ENCODE measurements at regions of chr22 and their contacts with region 1.

Region 1: GRCh38 chr22:46563381-46564083 is 26.1 kb upstream of the CELSR1 start:
- DNase-seq: peak; percentile 64
- ATAC-seq: peak; percentile 95
- H3K4me3 ChIP-seq: peak overlapping the region; percentile 41 to 76 (median 58); a peak in 5 of 6 replicates
- H3K27ac ChIP-seq: peak overlapping the region; percentile 59
- H3K4me1 ChIP-seq: peaks cover 27% of the 10 kb centered on the region
- H3K27me3 ChIP-seq: no peaks in the 10 kb centered on the region
- CTCF ChIP-seq: peak; percentile 86
- EP300 ChIP-seq: no peak
- POLR2A ChIP-seq: no peak
- RAD21 ChIP-seq: peak; percentile 86

Region 2: GRCh38 chr22:46547883-46548244 is 15.7 kb before region 1 on chr22:
- CTCF ChIA-PET with region 1: no interaction called
- POLR2A ChIA-PET with region 1: interaction called, 11 read pairs
- in situ Hi-C with region 1: no loop called
- intact Hi-C with region 1: no loop called
- DNase-seq: peak; percentile 58
- ATAC-seq: peak; percentile 74
- H3K4me3 ChIP-seq: peak overlapping the region; percentile 5 to 54 (median 32)
- H3K27ac ChIP-seq: peak overlapping the region; percentile 42
- H3K4me1 ChIP-seq: peaks cover 40% of the 10 kb centered on the region
- H3K27me3 ChIP-seq: 0 out of 5 replicates have a peak, but pooled peaks cover 2% of the 10 kb centered on the region in 2 experiments
- CTCF ChIP-seq: no peak
- EP300 ChIP-seq: no peak
- POLR2A ChIP-seq: no peak
- RAD21 ChIP-seq: no peak

Region 3: GRCh38 chr22:46638601-46639431 is 75.3 kb after region 1 on chr22:
- CTCF ChIA-PET with region 1: interaction called, 3 read pairs
- POLR2A ChIA-PET with region 1: no interaction called
- in situ Hi-C with region 1: no loop called
- intact Hi-C with region 1: loop called (anchors 5 kb)
- DNase-seq: peak; percentile 99
- ATAC-seq: peak; percentile 92
- H3K4me3 ChIP-seq: peak overlapping the region in 1 of 3 experiments; percentile 31; a peak in 2 of 6 replicates
- H3K27ac ChIP-seq: peak overlapping the region; percentile 86
- H3K4me1 ChIP-seq: peaks cover 57% of the 10 kb centered on the region
- H3K27me3 ChIP-seq: no peaks in the 10 kb centered on the region
- CTCF ChIP-seq: peak; percentile 30; the same call in 1 of the 2 replicates
- EP300 ChIP-seq: peak; percentile 68 to 76
- POLR2A ChIP-seq: no peak
- RAD21 ChIP-seq: peak; percentile 52

Region 4: DNA sequence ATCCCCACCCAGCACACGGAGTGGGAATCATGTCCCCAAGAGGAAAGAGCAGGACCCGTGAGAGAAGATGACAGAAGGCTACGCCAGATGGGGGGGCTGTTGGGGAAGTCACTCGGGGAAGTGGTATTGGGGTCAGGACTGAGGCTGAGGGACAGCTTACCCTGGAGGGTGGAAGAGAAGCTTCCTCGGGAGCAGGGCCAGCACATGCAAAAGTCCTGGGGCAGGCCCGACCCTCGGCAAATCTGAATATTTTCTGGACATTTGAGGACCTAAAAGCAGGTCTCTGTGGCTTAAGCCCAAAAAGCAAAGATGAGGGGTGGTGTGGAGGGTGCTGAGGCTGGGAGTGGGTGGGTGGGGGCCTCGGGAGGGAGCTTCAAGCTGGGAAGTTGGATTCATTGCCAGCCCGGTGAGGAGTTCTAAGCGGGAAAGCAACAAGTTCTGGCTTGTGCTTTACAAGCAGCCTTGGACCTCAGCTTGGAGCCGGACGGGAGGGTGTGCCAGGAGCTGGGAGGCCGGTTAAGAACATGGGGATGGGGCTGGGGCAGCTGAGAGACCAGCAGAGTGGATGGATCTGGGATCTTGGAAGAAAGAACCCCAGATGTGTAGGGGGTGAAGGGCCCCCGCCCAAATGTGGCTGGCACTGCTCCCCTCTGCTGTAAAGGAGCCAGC is 91.5 kb after region 1 on chr22:
- CTCF ChIA-PET with region 1: interaction called, 13 read pairs
- POLR2A ChIA-PET with region 1: interaction called, 11 read pairs
- in situ Hi-C with region 1: loop called (anchors 25 kb)
- intact Hi-C with region 1: loop called (anchors 1 kb)
- DNase-seq: no peak
- ATAC-seq: no peak
- H3K4me3 ChIP-seq: no peak overlapping the region
- H3K27ac ChIP-seq: no peak overlapping the region
- H3K4me1 ChIP-seq: peaks cover 60% of the 10 kb centered on the region
- H3K27me3 ChIP-seq: no peaks in the 10 kb centered on the region; a peak in 1 of 5 replicates
- CTCF ChIP-seq: no peak
- EP300 ChIP-seq: no peak
- POLR2A ChIP-seq: no peak
- RAD21 ChIP-seq: no peak

Region 5: DNA sequence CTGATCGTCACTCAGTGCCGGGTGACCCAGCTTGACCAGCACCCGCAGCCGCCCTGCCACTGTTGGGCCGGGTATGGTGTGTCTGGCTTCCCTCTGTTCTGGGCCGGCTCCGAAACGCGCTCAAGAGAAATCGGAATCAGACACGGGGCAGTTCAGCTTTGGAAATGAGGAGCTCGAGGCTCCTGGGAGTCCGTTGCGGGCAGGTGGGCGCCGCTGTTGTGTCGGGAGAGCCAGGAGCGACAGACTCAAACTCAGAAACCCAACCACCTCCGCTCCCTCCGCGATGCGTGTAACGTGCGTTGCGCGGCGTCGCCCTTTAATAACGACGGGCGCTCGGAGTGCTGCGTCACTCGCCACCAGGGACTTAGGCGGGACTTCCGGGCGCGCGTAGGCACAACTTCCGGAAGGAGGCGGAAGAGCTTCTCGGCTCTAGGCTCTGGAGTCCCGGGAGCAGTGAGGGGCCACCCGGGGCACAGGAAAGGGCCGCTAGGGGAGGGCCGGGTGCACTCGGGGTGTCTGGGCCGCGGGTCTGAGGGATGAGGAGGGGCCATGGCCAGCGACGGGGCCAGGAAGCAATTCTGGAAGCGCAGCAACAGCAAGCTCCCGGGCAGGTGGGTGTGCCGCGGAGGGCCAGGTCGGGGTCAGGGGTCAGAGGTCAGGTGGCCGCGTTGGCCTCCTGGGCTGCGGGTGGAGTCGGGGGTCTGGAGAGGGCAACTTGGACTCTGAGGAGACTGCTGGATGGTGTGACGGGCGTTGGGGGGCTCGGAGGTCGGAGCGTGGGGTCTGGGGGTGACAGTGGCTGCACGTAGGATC is 198.9 kb after region 1 on chr22 and contains the start of gene TBC1D22A:
- CTCF ChIA-PET with region 1: no interaction called
- POLR2A ChIA-PET with region 1: interaction called, 15 read pairs
- in situ Hi-C with region 1: no loop called
- intact Hi-C with region 1: no loop called
- DNase-seq: peak; percentile 89
- ATAC-seq: peak; percentile 89
- H3K4me3 ChIP-seq: peak within 1 kb of the TSS; percentile 74 to 96 (median 80)
- H3K27ac ChIP-seq: peak within 1 kb of the TSS; percentile 91
- H3K4me1 ChIP-seq: peaks cover 56% of the 10 kb centered on the region
- H3K27me3 ChIP-seq: no peaks in the 10 kb centered on the region; a peak in 1 of 5 replicates
- CTCF ChIP-seq: 0 out of 2 replicates have a peak, but pooled peaks have one; percentile 23
- EP300 ChIP-seq: peak; percentile 37 to 45; a peak in 2 of 4 replicates
- POLR2A ChIP-seq: peak; percentile 99 to 100
- RAD21 ChIP-seq: no peak
- total RNA-seq, gene TBC1D22A: 17.3 and 17.6 TPM in 2 replicates